PC-3 (cell line): ENCODE measurements at regions of chr7 and their contacts with region 1.

Region 1: GRCh38 chr7:41107668-41108448 is 595.0 kb downstream of the INHBA start:
- DNase-seq: peak; percentile 98
- ATAC-seq: peak; percentile 92
- H3K4me3 ChIP-seq: peak overlapping the region; percentile 48; the same call in 1 of the 2 replicates
- H3K27ac ChIP-seq: peak overlapping the region; percentile 100
- H3K4me1 ChIP-seq: peaks cover 51% of the 10 kb centered on the region
- H3K27me3 ChIP-seq: no peaks in the 10 kb centered on the region
- CTCF ChIP-seq: no peak

Region 2: DNA sequence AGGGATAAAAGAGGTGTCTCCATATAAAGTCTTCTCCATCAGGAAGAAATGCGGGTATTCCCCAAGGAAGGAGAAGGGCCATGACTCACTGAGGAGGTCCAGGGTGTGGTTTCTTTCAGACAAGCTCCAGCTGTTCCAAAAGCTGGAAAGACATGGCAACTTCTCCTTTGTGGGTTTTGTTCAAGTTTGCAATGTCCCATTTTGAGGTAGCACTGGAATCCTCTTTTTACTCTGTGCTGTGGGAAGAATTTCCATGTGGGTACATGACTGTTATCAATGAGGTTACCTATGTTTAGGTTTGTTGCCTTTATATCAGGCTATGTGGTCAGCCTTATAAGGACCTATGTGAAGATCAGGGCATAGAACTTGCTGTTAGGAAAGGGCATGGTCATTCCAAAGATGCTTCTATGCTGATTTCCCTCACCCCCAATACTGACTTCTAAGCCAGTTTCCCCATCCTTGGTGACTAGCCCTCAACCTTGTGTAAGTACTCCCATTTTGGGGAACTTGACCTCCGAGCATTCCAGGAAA is 102.4 kb before region 1 on chr7:
- CTCF ChIA-PET with region 1: no interaction called
- POLR2A ChIA-PET with region 1: no interaction called
- intact Hi-C with region 1: loop called (anchors 5 kb)
- DNase-seq: peak; percentile 81
- ATAC-seq: peak; percentile 43
- H3K4me3 ChIP-seq: no peak overlapping the region
- H3K27ac ChIP-seq: peak overlapping the region; percentile 84
- H3K4me1 ChIP-seq: peaks cover 54% of the 10 kb centered on the region
- H3K27me3 ChIP-seq: no peaks in the 10 kb centered on the region
- CTCF ChIP-seq: no peak

Region 3: GRCh38 chr7:41148521-41148951 is 40.7 kb after region 1 on chr7:
- CTCF ChIA-PET with region 1: no interaction called
- POLR2A ChIA-PET with region 1: no interaction called
- intact Hi-C with region 1: loop called (anchors 1 kb)
- DNase-seq: peak; percentile 97
- ATAC-seq: peak; percentile 85
- H3K4me3 ChIP-seq: no peak overlapping the region
- H3K27ac ChIP-seq: peak overlapping the region; percentile 99
- H3K4me1 ChIP-seq: peaks cover 48% of the 10 kb centered on the region
- H3K27me3 ChIP-seq: no peaks in the 10 kb centered on the region
- CTCF ChIP-seq: no peak

Region 4: GRCh38 chr7:41224063-41224806 is 116.4 kb after region 1 on chr7:
- CTCF ChIA-PET with region 1: no interaction called
- POLR2A ChIA-PET with region 1: interaction called, 3 read pairs
- intact Hi-C with region 1: loop called (anchors 1 kb)
- DNase-seq: peak; percentile 98
- ATAC-seq: peak; percentile 85
- H3K4me3 ChIP-seq: no peak overlapping the region
- H3K27ac ChIP-seq: peak overlapping the region; percentile 98
- H3K4me1 ChIP-seq: peaks cover 38% of the 10 kb centered on the region
- H3K27me3 ChIP-seq: no peaks in the 10 kb centered on the region
- CTCF ChIP-seq: no peak

Region 5: GRCh38 chr7:41268878-41269277 is 161.0 kb after region 1 on chr7:
- CTCF ChIA-PET with region 1: no interaction called
- POLR2A ChIA-PET with region 1: no interaction called
- intact Hi-C with region 1: no loop called
- DNase-seq: no peak
- ATAC-seq: no peak
- H3K4me3 ChIP-seq: no peak overlapping the region
- H3K27ac ChIP-seq: no peak overlapping the region
- H3K4me1 ChIP-seq: no peaks in the 10 kb centered on the region
- H3K27me3 ChIP-seq: no peaks in the 10 kb centered on the region
- CTCF ChIP-seq: no peak

Region 6: GRCh38 chr7:41696314-41696916 is 588.6 kb after region 1 on chr7:
- CTCF ChIA-PET with region 1: no interaction called
- POLR2A ChIA-PET with region 1: no interaction called
- intact Hi-C with region 1: loop called (anchors 2 kb)
- DNase-seq: peak; percentile 88
- ATAC-seq: peak; percentile 56
- H3K4me3 ChIP-seq: peak overlapping the region; percentile 95
- H3K27ac ChIP-seq: peak overlapping the region; percentile 94
- H3K4me1 ChIP-seq: peaks cover 27% of the 10 kb centered on the region
- H3K27me3 ChIP-seq: no peaks in the 10 kb centered on the region
- CTCF ChIP-seq: peak; percentile 90